ENCODE measurements at regions of chr2 and their contacts with region 1.

Region 1: DNA sequence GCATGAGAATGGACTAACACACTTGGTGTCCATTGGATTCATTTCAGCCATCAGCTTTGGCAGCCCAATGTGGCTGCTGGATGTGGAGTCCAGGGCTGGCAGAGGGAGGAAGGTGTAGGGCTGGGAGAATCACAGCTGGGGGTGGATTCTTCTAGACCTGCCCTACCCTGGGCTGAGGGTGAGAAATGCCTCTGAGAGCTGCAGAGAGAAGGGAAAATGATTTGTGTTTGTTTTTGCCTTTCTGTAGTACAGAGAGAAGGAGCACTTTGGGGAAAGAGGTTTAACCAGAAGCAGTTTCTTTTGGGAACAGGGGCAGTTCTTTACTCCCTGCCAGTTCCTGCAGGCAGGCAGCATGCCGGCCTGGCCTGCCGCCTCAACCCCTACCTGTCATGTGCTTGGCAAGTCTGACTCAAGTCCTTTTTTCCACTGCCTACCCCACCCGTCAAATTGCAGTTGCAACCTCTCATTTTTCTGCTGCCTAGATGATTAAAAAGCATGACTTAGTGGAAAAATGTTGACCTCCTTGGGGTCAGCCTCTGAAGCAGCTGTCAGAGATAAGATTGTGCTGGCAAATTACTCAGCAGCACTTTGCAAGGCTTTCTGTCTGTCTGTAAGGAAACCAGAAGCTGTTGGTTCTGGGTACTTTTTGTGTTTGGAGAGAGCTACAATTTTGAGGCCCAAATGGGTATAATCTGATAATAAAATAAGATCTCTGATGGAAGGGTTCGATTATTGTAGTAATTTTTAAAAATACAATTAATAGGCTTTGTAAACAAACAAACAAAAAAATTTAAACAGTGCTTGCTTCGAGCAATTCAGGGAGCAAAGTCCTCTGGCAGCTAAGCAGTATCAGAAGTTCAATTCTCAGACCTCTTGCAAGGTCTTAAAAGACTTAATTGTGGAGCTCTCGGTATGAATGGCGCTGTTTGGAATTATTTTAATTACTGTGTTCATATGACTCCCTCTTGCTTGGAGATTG is 21.7 kb downstream of the LBH start:
- DNase-seq: peak; percentile 44
- H3K4me3 Mint-ChIP-seq: no peak overlapping the region
- H3K27ac Mint-ChIP-seq: peak overlapping the region; percentile 70
- H3K4me1 Mint-ChIP-seq: peaks cover 85% of the 10 kb centered on the region
- H3K27me3 Mint-ChIP-seq: no peaks in the 10 kb centered on the region

Region 2: DNA sequence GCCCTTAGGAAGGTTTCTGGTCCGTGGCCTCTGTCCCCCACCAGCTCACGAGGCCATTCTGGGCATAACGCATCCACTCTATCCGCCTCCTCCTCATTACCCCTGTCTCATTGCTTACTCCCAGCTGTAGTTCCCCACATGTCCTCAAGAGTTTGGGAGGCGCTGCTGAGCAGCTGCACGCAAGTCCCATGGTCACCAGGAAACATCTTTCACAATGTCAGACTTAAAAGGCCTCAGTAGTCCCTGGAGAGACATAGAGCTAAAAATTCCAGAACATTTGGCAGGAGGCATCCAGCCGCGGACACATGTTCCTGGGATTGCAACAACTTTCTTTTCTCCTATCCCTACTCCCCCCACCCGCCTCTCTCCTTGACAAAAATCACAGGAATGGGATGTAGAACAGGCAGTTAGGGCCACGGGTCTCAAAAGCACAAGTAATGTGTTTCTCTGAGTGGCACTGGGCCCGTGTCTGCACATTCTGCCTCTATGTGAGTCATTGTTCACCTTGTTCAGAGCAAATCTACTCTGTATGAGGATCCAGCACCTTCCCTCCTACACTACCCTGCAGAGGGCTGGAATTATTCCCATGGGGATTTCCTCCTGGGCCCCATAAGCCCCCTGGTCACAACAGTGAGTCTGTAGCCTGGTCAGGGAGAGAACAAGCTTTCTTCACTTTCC is 13.6 kb before region 1 on chr2:
- CTCF ChIA-PET with region 1: interaction called, 27 read pairs
- DNase-seq: peak; percentile 77
- H3K4me3 Mint-ChIP-seq: peak overlapping the region; percentile 2
- H3K27ac Mint-ChIP-seq: peak overlapping the region; percentile 67
- H3K4me1 Mint-ChIP-seq: peaks cover 89% of the 10 kb centered on the region
- H3K27me3 Mint-ChIP-seq: no peaks in the 10 kb centered on the region

Region 3: GRCh38 chr2:30514134-30514847 is 261.3 kb after region 1 on chr2:
- CTCF ChIA-PET with region 1: no interaction called
- DNase-seq: no peak
- H3K4me3 Mint-ChIP-seq: no peak overlapping the region
- H3K27ac Mint-ChIP-seq: no peak overlapping the region
- H3K4me1 Mint-ChIP-seq: no peaks in the 10 kb centered on the region
- H3K27me3 Mint-ChIP-seq: no peaks in the 10 kb centered on the region